Left cardiac atrium (tissue), 4 donors: ENCODE measurements at regions of chr22 and their contacts with region 1.

Region 1: DNA sequence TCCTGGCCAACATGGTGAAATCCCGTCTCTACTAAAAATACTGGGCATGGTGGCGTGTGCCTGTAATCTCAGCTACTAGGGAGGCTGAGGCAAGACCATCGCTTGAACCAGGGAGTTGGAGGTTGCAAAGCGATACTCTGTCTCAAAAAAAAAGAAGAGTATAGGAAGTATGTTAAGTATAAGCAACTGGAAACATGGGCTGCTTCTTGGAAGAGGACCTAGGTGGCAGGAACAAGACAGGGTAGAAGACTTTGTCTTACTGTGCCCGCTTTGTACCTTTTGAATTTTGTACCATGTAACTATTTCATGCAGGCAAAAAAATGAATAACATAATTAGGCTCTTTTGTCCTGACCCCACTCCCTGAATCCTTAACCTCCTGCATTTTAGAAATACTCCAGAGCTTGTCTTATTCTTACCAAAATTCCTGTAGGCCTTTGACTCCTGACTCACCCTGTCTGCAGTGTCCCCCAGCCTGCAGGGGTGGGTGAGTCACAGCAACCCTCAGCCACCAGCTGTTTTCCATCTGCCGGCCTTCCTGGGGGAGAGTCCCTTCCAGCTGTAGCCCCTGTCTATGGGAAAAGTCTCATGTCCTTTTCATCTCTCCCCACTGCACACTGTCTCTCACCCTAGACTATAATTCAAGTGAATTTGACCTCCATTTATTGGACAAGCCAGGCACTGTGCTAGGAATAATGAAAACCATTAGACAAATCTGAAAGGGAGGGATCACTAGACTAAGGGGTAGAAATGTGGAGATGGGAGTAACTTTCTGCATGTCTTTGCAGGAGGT is 41.8 kb downstream of the TXN2 start:
- DNase-seq: peak; percentile 71
- ATAC-seq: peak; percentile 79 to 96

Region 2: GRCh38 chr22:36398621-36399469 is 40.8 kb before region 1 on chr22:
- intact Hi-C with region 1: loop called in 1 of 2 experiments (anchors 10 kb)
- DNase-seq: no peak
- ATAC-seq: no peak